HCT116 (cell line): ENCODE measurements at regions of chr9 and their contacts with region 1.

Region 1: GRCh38 chr9:94002316-94003140 is 47.4 kb upstream of the BARX1 start:
- DNase-seq: no peak
- ATAC-seq: peak; percentile 89
- H3K4me3 ChIP-seq: no peak overlapping the region
- H3K27ac ChIP-seq: no peak overlapping the region
- H3K4me1 ChIP-seq: no peaks in the 10 kb centered on the region
- H3K27me3 ChIP-seq: no peaks in the 10 kb centered on the region
- CTCF ChIP-seq: peak; percentile 64 to 79 (median 64)
- POLR2A ChIP-seq: no peak
- RAD21 ChIP-seq: peak; percentile 72

Region 2: GRCh38 chr9:93682232-93682968 is 320.1 kb before region 1 on chr9:
- CTCF ChIA-PET with region 1: interaction called, 15 read pairs
- POLR2A ChIA-PET with region 1: interaction called, 3 read pairs
- RAD21 ChIA-PET with region 1: no interaction called
- intact Hi-C with region 1: loop called (anchors 1 kb)
- DNase-seq: peak; percentile 34
- ATAC-seq: peak; percentile 86
- H3K4me3 ChIP-seq: no peak overlapping the region
- H3K27ac ChIP-seq: no peak overlapping the region
- H3K4me1 ChIP-seq: peaks cover 3 to 5% of the 10 kb centered on the region in 2 experiments; a peak in 1 of 4 replicates
- H3K27me3 ChIP-seq: no peaks in the 10 kb centered on the region
- CTCF ChIP-seq: peak; percentile 80 to 88 (median 88)
- POLR2A ChIP-seq: no peak
- RAD21 ChIP-seq: peak; percentile 92

Region 3: GRCh38 chr9:93750045-93750444 is 252.5 kb before region 1 on chr9:
- CTCF ChIA-PET with region 1: no interaction called
- POLR2A ChIA-PET with region 1: no interaction called
- RAD21 ChIA-PET with region 1: no interaction called
- intact Hi-C with region 1: no loop called
- DNase-seq: no peak
- ATAC-seq: no peak
- H3K4me3 ChIP-seq: no peak overlapping the region
- H3K27ac ChIP-seq: no peak overlapping the region
- H3K4me1 ChIP-seq: no peaks in the 10 kb centered on the region
- H3K27me3 ChIP-seq: no peaks in the 10 kb centered on the region
- CTCF ChIP-seq: no peak
- POLR2A ChIP-seq: no peak
- RAD21 ChIP-seq: no peak

Region 4: DNA sequence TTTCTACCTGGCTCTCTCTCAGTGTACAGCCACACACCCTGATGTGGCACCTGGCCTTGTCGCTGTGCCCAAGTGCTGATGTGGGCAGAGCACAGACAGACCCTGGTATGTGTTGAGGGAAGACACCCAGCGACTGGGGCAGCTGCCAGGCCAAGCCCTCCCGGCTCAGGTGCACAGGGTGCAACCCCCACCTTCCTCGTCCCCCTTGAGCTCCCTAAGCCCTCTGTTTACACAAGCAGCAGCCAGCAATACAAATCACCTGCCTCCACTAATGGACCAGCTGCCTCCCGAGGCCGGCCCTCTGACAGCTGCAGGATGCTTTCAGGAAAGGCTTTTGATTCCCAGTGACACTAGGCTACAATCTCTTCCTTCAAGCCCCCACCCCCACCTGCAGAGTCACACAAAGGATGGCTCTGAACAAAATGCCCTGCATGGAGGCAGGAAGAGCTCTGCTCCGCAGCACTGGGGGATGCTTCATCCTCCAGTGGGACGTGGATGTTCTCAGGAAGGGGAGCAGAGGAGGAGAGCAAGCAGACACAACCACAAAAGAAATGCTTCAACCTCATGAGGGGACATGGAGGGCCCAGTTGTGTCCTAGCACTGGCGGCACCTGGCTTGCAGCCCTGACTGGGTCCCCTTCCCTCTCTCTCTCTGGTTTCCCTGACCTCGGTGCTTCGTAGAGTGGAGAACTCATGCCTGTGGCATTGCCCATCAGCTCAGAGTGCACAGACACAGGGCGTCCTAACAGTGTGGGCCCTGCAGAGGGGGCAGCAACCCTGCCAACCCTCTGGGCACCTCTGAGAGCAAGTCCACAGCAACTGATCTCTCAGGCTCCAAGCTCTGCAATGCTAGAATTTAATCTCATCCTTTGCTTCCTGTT is 188.2 kb before region 1 on chr9:
- CTCF ChIA-PET with region 1: interaction called, 6 read pairs
- POLR2A ChIA-PET with region 1: no interaction called
- RAD21 ChIA-PET with region 1: no interaction called
- intact Hi-C with region 1: loop called (anchors 2 kb)
- DNase-seq: no peak
- ATAC-seq: peak; percentile 77
- H3K4me3 ChIP-seq: no peak overlapping the region
- H3K27ac ChIP-seq: no peak overlapping the region
- H3K4me1 ChIP-seq: peaks cover 6 to 8% of the 10 kb centered on the region in 2 experiments
- H3K27me3 ChIP-seq: peaks cover 18% of the 10 kb centered on the region
- CTCF ChIP-seq: peak; percentile 18 to 44 (median 35); a peak in 3 of 6 replicates
- POLR2A ChIP-seq: no peak
- RAD21 ChIP-seq: peak; percentile 47; the same call in 1 of the 2 replicates

Region 5: DNA sequence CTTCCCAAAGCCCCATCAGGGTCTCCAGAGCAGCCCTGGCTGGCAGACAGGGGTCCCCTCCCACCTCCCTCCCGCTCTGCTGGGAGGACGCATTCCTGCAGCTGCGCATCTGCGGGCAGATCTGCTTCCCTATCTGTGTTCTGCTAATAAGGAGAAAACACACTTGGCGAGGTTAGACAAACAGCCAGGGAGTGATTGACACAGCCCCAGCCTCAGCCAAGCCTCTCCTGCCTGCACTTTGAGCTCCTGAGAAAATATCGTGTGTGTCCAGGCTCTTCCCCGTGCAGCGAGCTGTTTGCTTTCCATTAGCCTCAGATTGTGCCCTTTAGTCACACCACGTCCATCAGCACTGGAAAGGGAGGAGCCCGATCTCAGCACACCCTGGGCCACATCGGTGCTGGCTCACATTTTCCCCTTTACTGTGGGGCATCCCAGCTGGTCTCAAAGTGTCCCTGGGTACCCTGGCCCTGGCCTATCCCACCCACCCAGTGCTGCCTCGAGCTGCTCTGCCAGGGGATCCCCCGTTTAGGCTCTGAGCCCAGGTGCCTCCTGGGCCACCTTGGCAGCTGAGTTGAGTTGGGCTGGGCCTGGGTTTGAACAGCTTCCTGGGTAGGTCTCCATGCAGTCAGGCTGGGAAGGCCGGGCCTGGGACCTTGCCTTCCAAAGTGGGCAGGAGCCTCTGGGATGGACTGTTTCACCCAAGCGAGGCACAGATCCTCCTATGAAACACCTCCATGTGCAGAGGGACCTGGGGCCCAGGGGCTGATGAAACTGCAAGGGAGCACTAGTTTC is 108.4 kb before region 1 on chr9:
- CTCF ChIA-PET with region 1: no interaction called
- POLR2A ChIA-PET with region 1: no interaction called
- RAD21 ChIA-PET with region 1: no interaction called
- intact Hi-C with region 1: no loop called
- DNase-seq: no peak
- ATAC-seq: no peak
- H3K4me3 ChIP-seq: no peak overlapping the region
- H3K27ac ChIP-seq: no peak overlapping the region
- H3K4me1 ChIP-seq: no peaks in the 10 kb centered on the region
- H3K27me3 ChIP-seq: no peaks in the 10 kb centered on the region
- CTCF ChIP-seq: no peak
- POLR2A ChIP-seq: no peak
- RAD21 ChIP-seq: no peak

Region 6: GRCh38 chr9:94014065-94014654 is 11.6 kb after region 1 on chr9:
- CTCF ChIA-PET with region 1: interaction called, 25 read pairs
- POLR2A ChIA-PET with region 1: no interaction called
- RAD21 ChIA-PET with region 1: no interaction called
- intact Hi-C with region 1: no loop called
- DNase-seq: no peak
- ATAC-seq: peak; percentile 79
- H3K4me3 ChIP-seq: no peak overlapping the region
- H3K27ac ChIP-seq: no peak overlapping the region
- H3K4me1 ChIP-seq: peaks cover 5 to 9% of the 10 kb centered on the region in 2 experiments; a peak in 3 of 4 replicates
- H3K27me3 ChIP-seq: no peaks in the 10 kb centered on the region
- CTCF ChIP-seq: peak; percentile 50 to 76 (median 69); a peak in 5 of 6 replicates
- POLR2A ChIP-seq: no peak
- RAD21 ChIP-seq: peak; percentile 62

Region 7: DNA sequence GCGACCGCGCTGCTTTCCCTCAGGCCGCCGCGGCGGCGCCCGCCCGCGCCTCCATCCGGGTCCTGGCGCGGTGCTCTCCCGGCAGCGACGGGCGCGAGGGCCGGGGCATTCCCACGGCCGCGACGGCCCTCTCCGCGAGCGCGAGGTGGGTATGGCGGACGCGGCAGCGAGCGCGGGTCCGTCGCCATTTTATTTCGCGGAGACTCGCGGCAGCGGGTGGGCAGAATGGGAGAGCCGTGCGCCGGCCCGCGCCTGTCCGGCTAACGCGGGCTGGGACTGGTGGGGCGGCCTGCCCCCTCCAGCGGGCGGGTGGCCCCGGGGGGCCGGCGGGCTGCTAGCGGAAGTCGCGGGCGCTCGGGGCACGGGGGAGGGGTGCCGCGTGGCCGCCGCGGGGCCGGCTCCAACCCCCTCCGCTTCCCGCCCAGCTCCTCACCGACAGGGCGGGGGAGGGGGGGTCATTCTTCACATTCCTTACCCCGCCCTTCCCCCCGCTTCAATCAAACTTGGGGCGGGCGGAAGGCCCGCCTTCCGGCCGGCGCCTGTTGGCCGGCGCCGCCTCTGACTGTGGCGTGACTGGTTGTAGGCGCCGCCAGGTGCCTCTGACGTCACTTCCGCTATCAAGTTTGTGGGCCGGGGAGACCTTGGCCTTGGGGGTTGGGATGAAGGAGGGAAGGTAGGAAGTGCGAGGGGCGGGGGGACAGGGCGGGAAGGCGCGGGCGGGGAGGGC is 163.9 kb after region 1 on chr9:
- CTCF ChIA-PET with region 1: no interaction called
- POLR2A ChIA-PET with region 1: no interaction called
- RAD21 ChIA-PET with region 1: no interaction called
- intact Hi-C with region 1: no loop called
- DNase-seq: peak; percentile 98
- ATAC-seq: peak; percentile 76
- H3K4me3 ChIP-seq: peak overlapping the region; percentile 74 to 79
- H3K27ac ChIP-seq: peak overlapping the region; percentile 99
- H3K4me1 ChIP-seq: peaks cover 8 to 24% of the 10 kb centered on the region in 2 experiments
- H3K27me3 ChIP-seq: no peaks in the 10 kb centered on the region
- CTCF ChIP-seq: no peak
- POLR2A ChIP-seq: peak; percentile 18
- RAD21 ChIP-seq: no peak